ENCODE measurements at regions of chr7 and their contacts with region 1.

Region 1: GRCh38 chr7:134755401-134756022 is 23.9 kb upstream of the CALD1 start:
- H3K4me3 Mint-ChIP-seq: no peak overlapping the region
- H3K27ac Mint-ChIP-seq: no peak overlapping the region
- H3K4me1 Mint-ChIP-seq: peaks cover 17% of the 10 kb centered on the region
- H3K27me3 Mint-ChIP-seq: peaks cover 8% of the 10 kb centered on the region

Region 2: DNA sequence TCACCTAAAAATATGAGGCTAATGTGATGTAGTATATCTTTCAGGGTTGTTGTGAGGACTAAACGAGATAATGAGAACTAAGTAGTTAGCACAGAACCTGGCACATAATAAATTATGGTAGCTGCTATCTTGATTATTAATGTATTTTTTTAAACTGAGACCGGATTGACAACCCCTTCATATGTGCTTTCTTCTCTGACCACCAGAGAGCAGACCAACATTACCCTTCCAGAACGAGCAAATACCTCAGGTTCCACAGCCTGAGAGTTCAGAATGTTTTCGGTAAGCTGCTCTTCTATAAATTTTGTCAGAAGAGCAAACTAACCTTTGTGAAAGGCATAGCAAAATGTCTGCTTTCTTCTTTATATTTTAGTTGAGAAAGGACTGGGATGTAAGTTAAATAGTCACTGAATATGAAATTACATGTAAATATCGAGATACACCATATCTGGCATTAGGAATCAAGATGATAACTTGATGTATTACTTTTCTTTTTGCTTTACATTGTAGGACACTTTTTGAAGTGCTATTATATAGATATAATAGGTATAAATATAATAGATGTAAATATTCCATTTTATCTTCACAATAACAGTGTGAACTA is 122.5 kb before region 1 on chr7:
- intact Hi-C with region 1: loop called (anchors 5 kb)
- H3K4me3 Mint-ChIP-seq: no peak overlapping the region
- H3K27ac Mint-ChIP-seq: no peak overlapping the region
- H3K4me1 Mint-ChIP-seq: peaks cover 43% of the 10 kb centered on the region
- H3K27me3 Mint-ChIP-seq: no peaks in the 10 kb centered on the region

Region 3: DNA sequence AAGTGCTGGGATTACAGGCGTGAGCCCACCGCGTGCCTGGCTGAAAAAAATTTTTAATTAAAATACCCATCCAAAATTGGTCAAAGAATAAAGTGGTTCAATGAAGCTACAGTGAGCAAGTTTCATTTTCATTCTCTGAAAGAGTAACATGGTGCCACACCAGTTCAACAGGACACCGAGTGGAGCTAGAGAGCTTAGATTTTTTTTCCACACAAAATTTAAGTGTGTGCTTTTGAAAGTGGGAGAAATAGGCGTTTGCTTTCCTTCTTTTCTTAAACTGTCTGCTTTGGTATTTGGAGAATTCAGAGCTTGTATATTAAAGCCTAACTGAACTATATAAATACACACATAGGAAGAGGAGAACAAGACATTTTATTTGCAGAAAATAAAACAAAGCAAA is 65.5 kb before region 1 on chr7:
- intact Hi-C with region 1: loop called (anchors 5 kb)
- H3K4me3 Mint-ChIP-seq: no peak overlapping the region
- H3K27ac Mint-ChIP-seq: no peak overlapping the region
- H3K4me1 Mint-ChIP-seq: peaks cover 45% of the 10 kb centered on the region
- H3K27me3 Mint-ChIP-seq: peaks cover 15% of the 10 kb centered on the region

Region 4: GRCh38 chr7:134724606-134725005 is 30.9 kb before region 1 on chr7:
- intact Hi-C with region 1: loop called (anchors 1 kb)
- H3K4me3 Mint-ChIP-seq: no peak overlapping the region
- H3K27ac Mint-ChIP-seq: peak overlapping the region; percentile 52
- H3K4me1 Mint-ChIP-seq: peaks cover 52% of the 10 kb centered on the region
- H3K27me3 Mint-ChIP-seq: no peaks in the 10 kb centered on the region

Region 5: GRCh38 chr7:134789967-134790685 is 34.6 kb after region 1 on chr7:
- intact Hi-C with region 1: no loop called
- H3K4me3 Mint-ChIP-seq: no peak overlapping the region
- H3K27ac Mint-ChIP-seq: no peak overlapping the region
- H3K4me1 Mint-ChIP-seq: no peaks in the 10 kb centered on the region
- H3K27me3 Mint-ChIP-seq: no peaks in the 10 kb centered on the region

Measured in dendritic cell treated with granulocyte-macrophage colony-stimulating factor and Interleukin-4, amounts not matched to agents 40 ng/mL and 50 ng/mL, for 4 days (primary cell).